Activated CD4-positive, alpha-beta memory T cell treated with anti-CD3 and anti-CD28 coated beads for 36 hours (primary cell): ENCODE measurements at regions of chr2 and their contacts with region 1.

Region 1: GRCh38 chr2:68751397-68752339 is 17.1 kb downstream of the ARHGAP25 start:
- DNase-seq: peak; percentile 95
- H3K4me3 Mint-ChIP-seq: peak overlapping the region; percentile 30
- H3K27ac Mint-ChIP-seq: peak overlapping the region; percentile 79
- H3K4me1 Mint-ChIP-seq: peaks cover 85% of the 10 kb centered on the region
- H3K27me3 Mint-ChIP-seq: no peaks in the 10 kb centered on the region

Region 2: GRCh38 chr2:68487773-68488355 is 263.8 kb before region 1 on chr2:
- CTCF ChIA-PET with region 1: interaction called, 13 read pairs
- POLR2A ChIA-PET with region 1: no interaction called
- intact Hi-C with region 1: no loop called
- DNase-seq: no peak
- H3K4me3 Mint-ChIP-seq: no peak overlapping the region
- H3K27ac Mint-ChIP-seq: no peak overlapping the region
- H3K4me1 Mint-ChIP-seq: peaks cover 2% of the 10 kb centered on the region
- H3K27me3 Mint-ChIP-seq: no peaks in the 10 kb centered on the region

Region 3: DNA sequence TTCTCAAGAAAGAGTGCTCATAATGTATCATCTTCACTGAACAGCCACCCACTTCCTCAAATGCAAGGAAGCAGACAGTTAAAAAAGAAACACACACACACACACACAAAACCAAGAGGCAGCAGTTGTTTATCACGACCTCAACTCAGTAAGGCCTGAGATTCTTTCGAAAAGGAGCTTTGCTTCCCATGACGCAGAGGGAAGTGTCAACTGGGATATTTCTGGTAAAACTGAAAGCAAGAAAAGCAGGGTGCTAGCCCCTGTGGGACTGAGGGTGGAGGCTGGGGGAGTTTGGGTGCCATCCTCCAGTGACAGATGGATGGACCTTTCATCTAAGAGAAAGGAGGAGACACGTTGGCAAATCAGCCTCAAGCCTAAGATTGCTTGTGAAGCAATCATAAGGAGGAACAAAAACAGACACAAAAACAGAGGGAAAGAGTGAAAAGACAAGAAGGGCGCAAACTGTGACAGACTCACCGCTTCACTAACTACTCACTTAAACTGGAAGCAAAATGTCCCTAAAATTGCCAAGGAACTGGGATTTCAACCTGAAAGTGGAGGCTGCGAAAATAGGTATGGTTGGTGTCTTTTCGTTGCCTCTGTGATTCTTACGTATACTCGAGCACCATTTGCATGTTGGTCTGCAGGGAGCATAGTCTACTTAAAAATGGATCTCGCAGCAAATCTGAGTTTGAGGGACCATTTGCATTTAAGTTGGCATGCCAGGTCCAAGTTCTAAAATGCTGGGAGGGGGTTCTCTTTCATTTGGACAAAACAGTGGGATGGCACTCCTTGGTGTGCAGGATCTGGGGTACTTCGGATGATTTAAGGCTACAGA is 16.8 kb before region 1 on chr2 and contains the start of gene ARHGAP25:
- CTCF ChIA-PET with region 1: interaction called, 89 read pairs
- POLR2A ChIA-PET with region 1: interaction called, 3 read pairs
- intact Hi-C with region 1: loop called (anchors 1 kb)
- DNase-seq: peak; percentile 87
- H3K4me3 Mint-ChIP-seq: no peak within 1 kb of the TSS
- H3K27ac Mint-ChIP-seq: no peak within 1 kb of the TSS
- H3K4me1 Mint-ChIP-seq: peaks cover 36% of the 10 kb centered on the region
- H3K27me3 Mint-ChIP-seq: no peaks in the 10 kb centered on the region
- total RNA-seq, gene ARHGAP25: 79.8 to 87.7 TPM

Region 4: GRCh38 chr2:68774569-68775271 is 23.1 kb after region 1 on chr2:
- CTCF ChIA-PET with region 1: interaction called, 65 read pairs
- POLR2A ChIA-PET with region 1: interaction called, 3 read pairs
- intact Hi-C with region 1: no loop called
- DNase-seq: peak; percentile 83
- H3K4me3 Mint-ChIP-seq: peak overlapping the region; percentile 65
- H3K27ac Mint-ChIP-seq: peak overlapping the region; percentile 85
- H3K4me1 Mint-ChIP-seq: peaks cover 87% of the 10 kb centered on the region
- H3K27me3 Mint-ChIP-seq: no peaks in the 10 kb centered on the region

Region 5: DNA sequence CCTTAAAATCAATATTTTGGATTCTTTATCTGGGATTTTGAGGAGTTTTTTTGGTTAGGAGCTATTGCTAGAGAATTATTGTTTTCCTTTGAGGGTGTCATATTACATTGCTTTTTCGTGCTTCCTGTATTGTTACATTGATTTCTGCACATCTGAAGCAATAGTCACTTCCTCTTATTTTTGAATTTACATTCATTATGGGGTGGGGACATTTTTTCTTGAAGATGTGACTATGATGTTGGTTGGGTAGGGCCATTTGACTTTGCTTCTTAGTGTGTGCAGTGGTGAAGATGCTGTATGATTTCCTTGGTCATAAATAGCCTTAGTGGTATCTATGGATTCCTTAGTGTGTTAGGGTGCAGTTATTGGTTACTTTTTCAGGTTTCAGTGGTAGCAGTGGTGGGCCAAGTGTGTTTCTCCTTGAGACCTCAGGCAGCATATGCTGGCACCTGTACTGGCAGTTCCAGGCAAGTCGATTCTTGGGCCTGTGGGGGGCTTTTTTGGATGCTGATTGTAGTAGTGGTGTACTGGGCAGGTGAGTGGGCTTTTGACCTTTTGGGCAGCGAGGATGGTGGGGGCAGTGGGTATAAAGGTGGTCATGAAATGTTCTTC is 44.7 kb after region 1 on chr2:
- CTCF ChIA-PET with region 1: interaction called, 10 read pairs
- POLR2A ChIA-PET with region 1: no interaction called
- intact Hi-C with region 1: no loop called
- DNase-seq: peak; percentile 40
- H3K4me3 Mint-ChIP-seq: peak overlapping the region; percentile 32
- H3K27ac Mint-ChIP-seq: peak overlapping the region; percentile 90
- H3K4me1 Mint-ChIP-seq: peaks cover 80% of the 10 kb centered on the region
- H3K27me3 Mint-ChIP-seq: no peaks in the 10 kb centered on the region

Region 6: DNA sequence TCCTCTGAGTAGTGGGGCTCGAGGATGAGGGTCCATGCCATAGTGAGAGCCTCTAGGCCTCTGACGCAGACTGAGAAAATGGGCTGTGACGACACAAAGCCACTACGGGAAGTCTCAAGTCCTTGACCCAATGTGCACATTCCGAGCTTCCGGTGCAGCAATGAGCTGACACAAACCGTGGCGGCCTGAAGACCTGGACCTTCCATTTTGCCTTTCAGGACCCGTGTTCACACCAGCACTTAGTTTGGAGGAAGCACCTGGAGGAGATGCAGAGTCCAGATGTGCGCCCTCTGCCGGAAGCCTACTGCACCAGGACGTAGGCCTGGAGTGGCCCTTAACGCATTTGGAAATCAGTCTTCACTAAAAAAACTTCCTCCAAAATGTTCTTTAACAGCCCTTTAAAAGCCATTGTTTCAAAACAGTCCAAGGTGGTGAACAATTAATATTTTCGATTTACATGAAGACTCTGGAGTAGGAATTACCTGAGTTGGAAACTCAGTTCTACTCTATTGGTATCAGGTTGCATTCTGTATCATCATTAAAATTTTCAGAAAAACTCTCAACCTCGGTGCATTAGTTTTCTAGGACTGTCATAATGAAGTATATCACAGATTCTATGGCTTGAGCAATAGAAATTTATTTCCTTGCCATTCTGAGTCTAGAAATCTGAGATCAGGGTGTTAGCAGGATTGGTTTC is 85.6 kb after region 1 on chr2:
- CTCF ChIA-PET with region 1: interaction called, 53 read pairs
- POLR2A ChIA-PET with region 1: no interaction called
- intact Hi-C with region 1: loop called (anchors 1 kb)
- DNase-seq: peak; percentile 77
- H3K4me3 Mint-ChIP-seq: no peak overlapping the region
- H3K27ac Mint-ChIP-seq: peak overlapping the region; percentile 63
- H3K4me1 Mint-ChIP-seq: peaks cover 47% of the 10 kb centered on the region
- H3K27me3 Mint-ChIP-seq: no peaks in the 10 kb centered on the region

Region 7: DNA sequence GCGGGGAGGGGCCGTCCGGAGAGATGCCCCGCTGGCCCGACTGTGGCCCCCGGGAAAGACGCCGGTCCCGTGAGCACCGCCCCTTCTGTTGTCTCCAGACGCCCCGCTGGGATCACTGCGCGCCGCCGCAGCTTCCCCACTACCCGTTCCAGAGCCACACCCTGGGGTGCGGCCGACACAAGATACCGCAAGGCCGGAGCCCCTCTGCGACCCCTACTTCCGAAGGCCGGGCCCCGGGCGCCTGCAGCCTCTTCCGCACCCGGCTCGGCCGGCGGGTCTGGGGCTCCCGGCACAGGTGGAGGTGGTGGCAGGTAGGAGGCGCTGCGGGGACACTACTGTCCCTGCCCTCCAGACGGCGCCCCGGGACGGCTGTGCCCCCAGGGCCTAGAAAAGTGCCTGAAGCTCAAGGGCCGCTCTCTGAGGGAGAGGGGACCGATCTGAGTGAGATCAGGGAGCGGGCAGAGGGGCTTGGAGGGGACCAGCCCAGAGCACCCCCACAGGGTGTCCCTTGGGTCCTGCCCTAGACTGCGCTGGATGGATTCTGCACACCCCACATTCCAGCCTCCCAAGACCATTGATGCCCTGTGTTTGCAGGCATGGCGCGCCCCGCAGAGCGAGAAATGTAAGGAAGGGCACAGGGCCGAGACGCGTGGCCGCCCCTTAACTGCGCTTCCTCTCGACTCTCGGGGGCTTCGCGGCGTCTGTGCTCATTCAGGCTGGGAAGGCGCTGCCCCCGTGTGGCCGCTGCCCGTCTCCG is 555.3 kb after region 1 on chr2:
- CTCF ChIA-PET with region 1: no interaction called
- POLR2A ChIA-PET with region 1: no interaction called
- intact Hi-C with region 1: no loop called
- DNase-seq: peak; percentile 77
- H3K4me3 Mint-ChIP-seq: peak overlapping the region; percentile 66
- H3K27ac Mint-ChIP-seq: no peak overlapping the region
- H3K4me1 Mint-ChIP-seq: peaks cover 19% of the 10 kb centered on the region
- H3K27me3 Mint-ChIP-seq: peaks cover 31% of the 10 kb centered on the region